H1 (cell line): ENCODE measurements at regions of chr11 and their contacts with region 1.

Region 1: DNA sequence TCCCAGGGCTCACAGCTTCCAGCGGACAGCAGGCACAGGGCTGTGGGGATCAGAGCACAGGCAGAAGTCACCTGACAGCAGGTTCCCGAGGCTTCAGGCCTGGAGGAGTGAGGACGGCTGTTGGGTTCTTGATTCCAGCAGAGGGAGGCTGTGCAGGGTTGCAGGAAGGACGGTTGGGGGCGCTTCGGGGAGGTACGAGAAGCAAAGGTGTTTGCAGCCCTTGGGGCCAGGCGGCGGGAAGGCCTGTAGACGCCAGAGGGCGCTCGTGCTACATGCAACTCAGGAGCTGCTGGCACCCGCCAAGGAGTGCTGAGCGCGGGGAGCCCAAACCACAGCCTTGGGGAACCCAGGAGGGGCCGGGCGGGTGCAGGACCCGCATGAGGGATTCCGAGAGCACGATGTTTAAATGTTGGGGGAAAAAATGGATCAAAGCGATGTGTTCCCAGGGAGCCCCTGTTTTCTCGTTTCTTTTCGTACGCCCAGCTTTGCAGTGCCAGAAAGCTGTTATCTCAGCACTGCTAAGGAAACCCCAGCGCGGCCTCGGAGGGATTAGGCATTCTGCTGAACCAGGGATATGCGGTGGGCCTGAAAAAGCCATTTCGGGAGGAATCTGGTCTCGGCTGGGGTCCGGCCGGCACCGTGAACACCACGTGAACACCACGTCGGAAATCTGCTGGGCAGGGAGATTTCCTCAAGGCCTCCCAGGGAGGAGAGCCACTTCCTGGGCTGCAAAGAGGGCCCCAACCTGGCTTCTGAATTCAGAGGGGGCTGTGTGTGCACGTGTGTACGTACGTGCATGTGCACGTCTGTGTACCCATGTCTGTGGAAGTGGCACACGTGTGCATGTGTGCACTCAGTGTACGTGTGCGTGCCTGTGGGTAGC is 88.1 kb downstream of the KCNQ1 start:
- DNase-seq: peak; percentile 96 to 99
- H3K4me3 ChIP-seq: no peak overlapping the region
- H3K27ac ChIP-seq: peak overlapping the region; percentile 4; the same call in 1 of the 2 replicates
- H3K4me1 ChIP-seq: peaks cover 4 to 16% (median 10%) of the 10 kb centered on the region in 4 experiments
- H3K27me3 ChIP-seq: peaks cover 1 to 40% (median 14%) of the 10 kb centered on the region in 4 experiments; a peak in 6 of 7 replicates
- CTCF ChIP-seq: peak in 2 of 3 experiments; percentile 99 to 100; a peak in 3 of 4 replicates
- EP300 ChIP-seq: peak in 1 of 2 experiments; percentile 81; a peak in 1 of 3 replicates
- POLR2A ChIP-seq: no peak
- RAD21 ChIP-seq: peak; percentile 99 to 100

Region 2: GRCh38 chr11:2305140-2305840 is 227.7 kb before region 1 on chr11:
- CTCF ChIA-PET with region 1: interaction called, 35 read pairs
- POLR2A ChIA-PET with region 1: no interaction called
- DNase-seq: peak; percentile 38 to 96
- H3K4me3 ChIP-seq: no peak overlapping the region
- H3K27ac ChIP-seq: no peak overlapping the region
- H3K4me1 ChIP-seq: peaks cover 0 to 3% (median 0%) of the 10 kb centered on the region in 4 experiments; a peak in 1 of 7 replicates
- H3K27me3 ChIP-seq: no peaks in the 10 kb centered on the region
- CTCF ChIP-seq: peak; percentile 89 to 94 (median 94)
- EP300 ChIP-seq: no peak
- POLR2A ChIP-seq: no peak
- RAD21 ChIP-seq: peak; percentile 89 to 91

Region 3: DNA sequence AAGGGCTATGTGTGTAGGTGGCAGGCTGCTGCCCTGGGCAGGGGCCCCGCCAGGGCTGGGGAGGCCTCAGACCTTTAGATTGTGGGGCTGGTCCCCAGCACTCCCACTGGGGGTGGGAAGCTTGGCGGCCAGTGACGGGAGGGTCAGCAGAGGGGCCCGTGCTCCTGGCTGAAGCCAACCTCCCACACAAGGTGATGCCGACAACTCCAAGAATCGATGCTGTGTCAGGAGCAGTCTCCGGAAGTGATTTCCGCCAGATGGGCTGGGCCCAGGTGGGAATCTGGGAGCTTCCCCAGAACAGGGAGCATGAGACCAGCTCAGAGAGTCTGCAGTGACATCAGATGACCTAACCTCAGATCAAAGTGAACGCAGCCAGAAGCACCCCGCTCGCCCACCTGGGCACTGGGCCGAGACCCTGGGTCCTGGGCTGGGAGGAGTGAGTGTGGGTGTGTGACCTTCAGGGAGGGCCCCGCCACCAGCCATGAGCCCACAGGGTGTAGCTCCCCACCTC is 96.4 kb before region 1 on chr11:
- CTCF ChIA-PET with region 1: interaction called, 37 read pairs
- POLR2A ChIA-PET with region 1: interaction called, 3 read pairs
- DNase-seq: no peak
- H3K4me3 ChIP-seq: no peak overlapping the region
- H3K27ac ChIP-seq: no peak overlapping the region
- H3K4me1 ChIP-seq: no peaks in the 10 kb centered on the region; a peak in 1 of 7 replicates
- H3K27me3 ChIP-seq: peaks cover 2 to 13% (median 8%) of the 10 kb centered on the region in 4 experiments; a peak in 6 of 7 replicates
- CTCF ChIP-seq: no peak
- EP300 ChIP-seq: no peak
- POLR2A ChIP-seq: no peak
- RAD21 ChIP-seq: no peak

Region 4: DNA sequence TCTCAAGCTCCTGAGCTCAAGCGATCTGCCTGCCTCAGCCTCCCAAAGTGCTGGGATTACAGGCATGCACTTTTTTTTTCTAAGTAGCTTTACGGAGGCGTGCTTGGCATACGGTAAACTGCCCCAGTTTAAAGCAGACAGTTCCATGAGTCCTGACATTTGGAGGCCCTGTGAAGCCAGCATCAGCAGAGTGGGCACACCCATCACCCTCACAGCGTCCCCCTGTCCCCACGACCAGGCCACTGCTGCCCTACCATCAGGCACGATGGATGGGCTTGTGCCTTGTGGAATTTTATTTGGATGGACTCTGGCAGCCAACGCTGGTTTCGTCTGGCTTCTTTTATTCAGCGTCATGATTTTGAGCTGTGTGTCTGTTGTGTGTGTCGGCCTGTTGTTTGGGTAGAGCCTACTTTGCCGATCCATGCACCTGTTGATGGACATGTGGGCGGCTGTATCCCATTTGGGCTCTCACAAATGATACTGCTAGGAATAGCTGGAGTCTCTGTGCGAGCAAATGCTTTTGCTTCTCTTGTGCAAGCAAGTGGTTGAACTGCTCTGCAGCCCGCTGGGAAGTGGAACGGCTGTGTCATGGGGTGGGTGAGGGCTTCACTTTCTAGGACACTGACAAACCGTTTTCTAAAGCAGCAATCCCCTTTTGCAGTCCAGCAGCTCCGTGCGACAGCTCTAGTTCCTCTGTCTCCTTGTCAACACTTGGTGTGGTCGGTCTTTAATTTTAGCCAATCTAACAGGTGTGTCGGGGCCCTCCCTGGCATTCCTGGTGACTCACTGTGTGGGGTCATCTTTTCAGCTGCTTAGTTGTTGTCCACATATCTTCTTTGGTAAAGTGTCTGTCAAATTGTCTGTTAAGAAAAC is 64.3 kb before region 1 on chr11:
- CTCF ChIA-PET with region 1: interaction called, 14 read pairs
- POLR2A ChIA-PET with region 1: no interaction called
- DNase-seq: no peak
- H3K4me3 ChIP-seq: no peak overlapping the region
- H3K27ac ChIP-seq: no peak overlapping the region
- H3K4me1 ChIP-seq: no peaks in the 10 kb centered on the region
- H3K27me3 ChIP-seq: peaks cover 0 to 30% (median 14%) of the 10 kb centered on the region in 4 experiments; a peak in 6 of 7 replicates
- CTCF ChIP-seq: no peak
- EP300 ChIP-seq: no peak
- POLR2A ChIP-seq: no peak
- RAD21 ChIP-seq: no peak

Region 5: DNA sequence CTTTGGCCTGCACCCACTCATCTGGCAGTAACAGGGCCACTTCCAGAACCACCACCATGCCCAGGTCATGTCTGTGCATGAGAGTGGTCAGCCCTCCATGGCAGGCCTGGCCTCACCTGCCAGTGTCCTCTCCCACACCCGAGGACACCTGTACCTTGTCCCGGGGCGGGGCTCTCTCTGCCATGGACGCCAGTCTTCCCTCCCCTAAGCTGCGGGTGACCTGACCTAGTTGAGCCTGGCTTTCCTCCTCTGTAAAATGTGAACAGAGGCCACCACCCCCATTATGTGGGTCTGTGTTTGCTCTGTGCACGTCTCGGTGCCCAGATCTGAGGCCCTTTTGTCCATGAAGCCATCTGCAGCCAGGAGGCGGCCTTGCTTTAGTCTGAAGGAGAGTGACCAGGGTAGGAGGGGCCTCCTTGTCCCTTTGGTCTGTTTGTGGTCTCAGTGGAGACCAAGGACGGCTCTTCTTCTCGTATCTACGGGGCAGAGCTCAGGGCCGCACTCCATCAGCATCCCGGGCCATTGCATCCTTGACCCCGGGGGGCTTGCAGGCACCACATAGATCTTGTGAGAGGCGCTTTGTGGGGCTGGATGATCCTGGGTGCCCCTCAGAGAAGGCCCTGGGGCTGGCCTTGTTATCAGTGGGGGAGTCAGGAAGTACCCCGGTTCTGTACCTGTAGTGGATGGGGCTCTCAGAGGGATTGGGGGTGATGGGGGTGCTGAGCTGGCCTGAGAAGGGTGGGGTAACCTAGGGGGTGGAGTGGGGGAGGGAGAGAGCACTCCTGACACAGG is 33.5 kb after region 1 on chr11:
- CTCF ChIA-PET with region 1: interaction called, 16 read pairs
- POLR2A ChIA-PET with region 1: no interaction called
- DNase-seq: no peak
- H3K4me3 ChIP-seq: no peak overlapping the region
- H3K27ac ChIP-seq: no peak overlapping the region
- H3K4me1 ChIP-seq: peaks cover 0 to 5% (median under 1%) of the 10 kb centered on the region in 4 experiments; a peak in 3 of 7 replicates
- H3K27me3 ChIP-seq: peaks cover 0 to 51% (median 34%) of the 10 kb centered on the region in 4 experiments; a peak in 6 of 7 replicates
- CTCF ChIP-seq: peak in 2 of 3 experiments; percentile 19 to 24; a peak in 2 of 4 replicates
- EP300 ChIP-seq: no peak
- POLR2A ChIP-seq: no peak
- RAD21 ChIP-seq: peak; percentile 37 to 61; a peak in 3 of 4 replicates

Region 6: GRCh38 chr11:2860636-2861035 is 327.7 kb after region 1 on chr11:
- CTCF ChIA-PET with region 1: interaction called, 14 read pairs
- POLR2A ChIA-PET with region 1: no interaction called
- DNase-seq: no peak
- H3K4me3 ChIP-seq: no peak overlapping the region
- H3K27ac ChIP-seq: no peak overlapping the region
- H3K4me1 ChIP-seq: peaks cover 0 to 24% (median 15%) of the 10 kb centered on the region in 4 experiments; a peak in 6 of 7 replicates
- H3K27me3 ChIP-seq: peaks cover 9 to 59% (median 52%) of the 10 kb centered on the region in 4 experiments
- CTCF ChIP-seq: no peak
- EP300 ChIP-seq: no peak
- POLR2A ChIP-seq: no peak
- RAD21 ChIP-seq: no peak

Region 7: DNA sequence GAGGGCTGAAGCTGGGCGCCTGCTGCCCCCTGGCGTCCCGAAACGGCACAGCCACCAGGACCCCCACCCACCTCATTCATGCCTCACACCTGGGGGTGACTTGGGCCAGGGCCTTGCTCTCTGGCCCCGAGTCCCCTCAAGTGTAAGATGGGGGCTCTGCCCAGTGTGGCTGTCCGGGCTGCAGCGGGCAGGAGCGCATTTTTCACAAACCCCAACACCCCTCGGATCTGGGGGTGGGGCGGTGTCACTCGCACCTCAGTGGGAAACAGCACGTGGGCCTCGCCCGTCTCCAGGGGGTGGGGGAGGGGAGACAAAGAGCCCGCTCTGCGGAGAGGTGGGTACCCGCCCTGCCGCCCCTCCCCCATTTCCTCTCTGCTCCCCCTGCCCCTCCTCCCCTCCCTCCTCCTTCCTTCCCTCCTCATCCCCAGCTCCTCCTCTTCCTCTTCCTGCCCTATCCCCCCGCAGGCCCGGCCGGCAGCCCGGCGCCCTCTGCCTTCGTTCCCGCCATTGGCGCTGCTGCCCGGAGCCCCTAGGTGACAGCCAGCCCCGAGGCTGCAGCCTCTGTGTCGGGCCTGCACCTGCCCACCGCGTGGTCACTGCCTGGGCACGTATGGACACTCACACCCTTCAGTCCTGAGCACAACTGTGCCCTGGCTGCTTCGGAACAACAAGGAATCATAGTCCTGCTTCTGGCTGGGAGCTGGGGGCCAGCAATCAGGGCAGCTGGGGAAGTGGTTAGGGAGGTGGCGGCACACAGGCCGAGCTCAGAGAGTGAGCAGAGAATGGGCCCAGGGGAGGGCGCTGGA is 359.5 kb after region 1 on chr11:
- CTCF ChIA-PET with region 1: interaction called, 521 read pairs
- POLR2A ChIA-PET with region 1: interaction called, 16 read pairs
- DNase-seq: peak; percentile 59 to 91
- H3K4me3 ChIP-seq: peak overlapping the region; percentile 25 to 52 (median 40)
- H3K27ac ChIP-seq: peak overlapping the region; percentile 72; the same call in 1 of the 2 replicates
- H3K4me1 ChIP-seq: peaks cover 0 to 20% (median 15%) of the 10 kb centered on the region in 4 experiments; a peak in 6 of 7 replicates
- H3K27me3 ChIP-seq: peaks cover 0 to 23% (median 7%) of the 10 kb centered on the region in 4 experiments; a peak in 5 of 7 replicates
- CTCF ChIP-seq: peak in 2 of 3 experiments; percentile 92 to 93; a peak in 3 of 4 replicates
- EP300 ChIP-seq: 0 out of 3 replicates have a peak, but pooled peaks of 1 of the 2 experiments have one; percentile 6
- POLR2A ChIP-seq: no peak; a peak in 1 of 3 replicates
- RAD21 ChIP-seq: peak; percentile 90 to 94